ENCODE measurements at regions of chr7 and their contacts with region 1.

Region 1: DNA sequence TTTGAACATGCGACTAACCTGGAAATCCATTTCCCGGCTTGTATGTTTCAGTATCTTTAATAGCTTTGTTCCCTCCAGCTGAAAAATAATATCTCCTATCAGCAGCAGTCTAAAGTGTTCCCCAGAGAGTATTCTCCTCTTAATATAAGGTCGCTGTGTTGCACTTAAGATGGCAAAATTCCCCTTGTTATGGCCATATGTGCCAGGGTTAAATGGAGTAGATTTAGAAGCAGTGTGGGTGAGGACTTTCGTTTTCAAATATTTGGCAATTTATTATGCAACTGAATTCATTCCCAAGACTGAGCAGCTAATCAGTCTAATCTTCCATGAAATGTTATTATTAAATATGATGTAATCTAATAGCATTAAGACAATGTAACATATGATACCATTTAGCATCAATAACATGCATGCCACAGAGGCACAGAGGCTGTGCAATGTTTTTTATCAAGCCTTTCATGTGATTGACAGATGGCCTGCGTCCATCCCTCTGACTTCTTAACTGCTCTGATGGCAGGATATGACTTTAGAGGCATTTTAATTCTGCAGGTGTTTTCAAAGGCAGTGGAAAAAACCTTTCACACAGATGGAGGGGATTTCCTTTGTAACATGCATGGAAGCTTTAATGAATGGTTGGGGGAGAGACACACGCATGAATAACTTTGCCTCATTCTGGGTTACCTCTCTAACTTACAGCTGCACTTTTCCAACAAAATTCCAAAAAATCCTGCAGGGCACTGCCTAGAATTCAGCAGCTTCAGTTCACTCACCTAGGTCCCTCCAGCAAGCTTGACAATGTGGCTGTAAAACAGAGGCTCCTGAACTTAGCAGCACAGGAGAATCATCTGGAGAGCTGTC is 55.1 kb upstream of the ZPBP start:
- DNase-seq: peak; percentile 76
- ATAC-seq: peak; percentile 70
- H3K4me3 ChIP-seq: no peak overlapping the region
- H3K27ac ChIP-seq: peak overlapping the region; percentile 59
- H3K4me1 ChIP-seq: peaks cover 46% of the 10 kb centered on the region
- H3K27me3 ChIP-seq: no peaks in the 10 kb centered on the region
- CTCF ChIP-seq: no peak
- EP300 ChIP-seq: peak; percentile 52 to 85; a peak in 3 of 4 replicates
- POLR2A ChIP-seq: no peak
- RAD21 ChIP-seq: no peak

Region 2: DNA sequence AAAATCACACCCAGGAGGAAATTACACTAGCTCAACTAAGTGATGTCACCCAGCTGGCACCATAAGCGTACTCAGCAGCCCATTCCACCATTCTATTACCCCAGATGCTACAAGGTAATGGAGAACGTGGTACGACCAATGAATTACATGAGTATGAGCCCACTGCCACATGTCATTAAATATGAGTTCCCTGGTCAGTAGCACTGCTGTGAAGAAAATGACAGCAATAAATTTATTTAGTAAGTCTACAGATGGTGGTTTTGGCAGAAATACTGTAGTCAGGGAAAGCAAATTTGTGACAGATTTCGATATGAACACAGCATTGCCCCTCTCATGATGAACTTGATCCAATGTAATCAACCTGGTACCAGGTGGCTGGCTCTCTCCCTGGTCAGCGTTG is 220.5 kb before region 1 on chr7:
- CTCF ChIA-PET with region 1: no interaction called
- POLR2A ChIA-PET with region 1: no interaction called
- RAD21 ChIA-PET with region 1: no interaction called
- SMC1A ChIA-PET with region 1: no interaction called
- in situ Hi-C with region 1: no loop called
- intact Hi-C with region 1: no loop called
- DNase-seq: no peak
- ATAC-seq: no peak
- H3K4me3 ChIP-seq: no peak overlapping the region
- H3K27ac ChIP-seq: no peak overlapping the region
- H3K4me1 ChIP-seq: no peaks in the 10 kb centered on the region
- H3K27me3 ChIP-seq: no peaks in the 10 kb centered on the region
- CTCF ChIP-seq: no peak
- EP300 ChIP-seq: no peak
- POLR2A ChIP-seq: no peak
- RAD21 ChIP-seq: no peak

Region 3: GRCh38 chr7:50119815-50120637 is 28.2 kb before region 1 on chr7:
- CTCF ChIA-PET with region 1: interaction called, 24 read pairs
- POLR2A ChIA-PET with region 1: no interaction called
- RAD21 ChIA-PET with region 1: interaction called, 8 read pairs
- SMC1A ChIA-PET with region 1: interaction called, 4 read pairs
- in situ Hi-C with region 1: no loop called
- intact Hi-C with region 1: no loop called
- DNase-seq: no peak
- ATAC-seq: peak; percentile 98
- H3K4me3 ChIP-seq: no peak overlapping the region
- H3K27ac ChIP-seq: no peak overlapping the region
- H3K4me1 ChIP-seq: peaks cover 4% of the 10 kb centered on the region; the same call in 1 of the 2 replicates
- H3K27me3 ChIP-seq: no peaks in the 10 kb centered on the region
- CTCF ChIP-seq: peak; percentile 68 to 70 (median 69)
- EP300 ChIP-seq: no peak
- POLR2A ChIP-seq: no peak
- RAD21 ChIP-seq: peak; percentile 77

Region 4: GRCh38 chr7:50185951-50186682 is 37.9 kb after region 1 on chr7:
- CTCF ChIA-PET with region 1: interaction called, 8 read pairs
- POLR2A ChIA-PET with region 1: no interaction called
- RAD21 ChIA-PET with region 1: interaction called, 4 read pairs
- SMC1A ChIA-PET with region 1: interaction called, 15 read pairs
- in situ Hi-C with region 1: no loop called
- intact Hi-C with region 1: no loop called
- DNase-seq: no peak
- ATAC-seq: no peak; the same call in 1 of the 3 replicates
- H3K4me3 ChIP-seq: no peak overlapping the region
- H3K27ac ChIP-seq: no peak overlapping the region
- H3K4me1 ChIP-seq: no peaks in the 10 kb centered on the region
- H3K27me3 ChIP-seq: no peaks in the 10 kb centered on the region
- CTCF ChIP-seq: no peak
- EP300 ChIP-seq: no peak
- POLR2A ChIP-seq: no peak
- RAD21 ChIP-seq: no peak

Region 5: GRCh38 chr7:50197549-50197948 is 49.4 kb after region 1 on chr7:
- CTCF ChIA-PET with region 1: interaction called, 151 read pairs
- POLR2A ChIA-PET with region 1: interaction called, 4 read pairs
- RAD21 ChIA-PET with region 1: interaction called, 135 read pairs
- SMC1A ChIA-PET with region 1: interaction called, 160 read pairs
- in situ Hi-C with region 1: no loop called
- intact Hi-C with region 1: no loop called
- DNase-seq: peak; percentile 54
- ATAC-seq: peak; percentile 97
- H3K4me3 ChIP-seq: no peak overlapping the region
- H3K27ac ChIP-seq: no peak overlapping the region
- H3K4me1 ChIP-seq: no peaks in the 10 kb centered on the region; the same call in 1 of the 2 replicates
- H3K27me3 ChIP-seq: no peaks in the 10 kb centered on the region
- CTCF ChIP-seq: no peak
- EP300 ChIP-seq: no peak
- POLR2A ChIP-seq: no peak
- RAD21 ChIP-seq: no peak

Region 6: GRCh38 chr7:50229964-50230363 is 81.8 kb after region 1 on chr7:
- CTCF ChIA-PET with region 1: interaction called, 4 read pairs
- POLR2A ChIA-PET with region 1: no interaction called
- RAD21 ChIA-PET with region 1: no interaction called
- SMC1A ChIA-PET with region 1: interaction called, 11 read pairs
- in situ Hi-C with region 1: no loop called
- intact Hi-C with region 1: no loop called
- DNase-seq: no peak
- ATAC-seq: no peak
- H3K4me3 ChIP-seq: no peak overlapping the region
- H3K27ac ChIP-seq: no peak overlapping the region
- H3K4me1 ChIP-seq: no peaks in the 10 kb centered on the region
- H3K27me3 ChIP-seq: no peaks in the 10 kb centered on the region
- CTCF ChIP-seq: peak; percentile 21 to 58 (median 46); a peak in 5 of 6 replicates
- EP300 ChIP-seq: no peak
- POLR2A ChIP-seq: no peak
- RAD21 ChIP-seq: peak; percentile 58

Region 7: DNA sequence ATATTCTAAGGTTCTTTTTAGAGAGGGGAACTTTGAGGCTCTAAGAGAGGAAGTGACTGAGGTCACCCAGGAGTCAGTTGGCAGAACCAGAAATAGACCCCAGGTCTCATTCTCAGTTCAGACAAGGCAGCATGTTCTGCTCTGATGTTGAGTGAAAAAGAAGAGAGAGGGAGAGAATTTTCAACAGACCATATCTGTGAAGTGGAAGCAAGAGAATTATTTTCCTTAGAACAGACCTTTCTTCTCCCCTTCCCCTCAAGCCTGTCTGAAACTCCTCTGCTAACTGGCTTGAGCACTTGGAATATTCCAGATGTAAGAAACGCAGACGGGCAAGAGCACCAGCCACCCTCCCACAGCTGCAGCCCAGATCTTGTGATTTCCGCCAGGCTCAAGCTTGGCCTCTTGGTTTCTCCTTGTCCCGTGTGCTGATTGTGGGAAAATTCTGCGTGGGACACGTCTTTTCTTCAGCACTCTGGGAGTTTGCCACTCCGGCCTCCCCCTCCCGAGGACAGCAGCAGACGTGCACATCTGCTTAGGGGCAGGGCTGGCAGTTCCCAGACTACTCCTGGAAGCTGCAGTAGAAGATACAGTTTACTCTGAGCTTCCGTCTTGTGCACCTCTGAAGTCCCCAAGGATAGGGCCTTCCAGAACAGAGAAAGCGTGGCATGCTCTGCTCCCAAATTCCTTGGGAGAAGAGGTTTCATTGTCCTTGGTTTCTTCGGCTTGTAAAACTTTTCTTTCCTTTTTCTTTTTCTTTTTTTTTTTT is 133.7 kb after region 1 on chr7:
- CTCF ChIA-PET with region 1: no interaction called
- POLR2A ChIA-PET with region 1: interaction called, 13 read pairs
- RAD21 ChIA-PET with region 1: interaction called, 11 read pairs
- SMC1A ChIA-PET with region 1: interaction called, 162 read pairs
- in situ Hi-C with region 1: no loop called
- intact Hi-C with region 1: no loop called
- DNase-seq: peak; percentile 81
- ATAC-seq: peak; percentile 88
- H3K4me3 ChIP-seq: peak overlapping the region; percentile 69
- H3K27ac ChIP-seq: peak overlapping the region; percentile 82
- H3K4me1 ChIP-seq: peaks cover 49% of the 10 kb centered on the region
- H3K27me3 ChIP-seq: no peaks in the 10 kb centered on the region
- CTCF ChIP-seq: no peak
- EP300 ChIP-seq: peak; percentile 35 to 72; a peak in 1 of 4 replicates
- POLR2A ChIP-seq: peak; percentile 54; the same call in 1 of the 2 replicates
- RAD21 ChIP-seq: peak; percentile 29; the same call in 1 of the 2 replicates

Region 8: DNA sequence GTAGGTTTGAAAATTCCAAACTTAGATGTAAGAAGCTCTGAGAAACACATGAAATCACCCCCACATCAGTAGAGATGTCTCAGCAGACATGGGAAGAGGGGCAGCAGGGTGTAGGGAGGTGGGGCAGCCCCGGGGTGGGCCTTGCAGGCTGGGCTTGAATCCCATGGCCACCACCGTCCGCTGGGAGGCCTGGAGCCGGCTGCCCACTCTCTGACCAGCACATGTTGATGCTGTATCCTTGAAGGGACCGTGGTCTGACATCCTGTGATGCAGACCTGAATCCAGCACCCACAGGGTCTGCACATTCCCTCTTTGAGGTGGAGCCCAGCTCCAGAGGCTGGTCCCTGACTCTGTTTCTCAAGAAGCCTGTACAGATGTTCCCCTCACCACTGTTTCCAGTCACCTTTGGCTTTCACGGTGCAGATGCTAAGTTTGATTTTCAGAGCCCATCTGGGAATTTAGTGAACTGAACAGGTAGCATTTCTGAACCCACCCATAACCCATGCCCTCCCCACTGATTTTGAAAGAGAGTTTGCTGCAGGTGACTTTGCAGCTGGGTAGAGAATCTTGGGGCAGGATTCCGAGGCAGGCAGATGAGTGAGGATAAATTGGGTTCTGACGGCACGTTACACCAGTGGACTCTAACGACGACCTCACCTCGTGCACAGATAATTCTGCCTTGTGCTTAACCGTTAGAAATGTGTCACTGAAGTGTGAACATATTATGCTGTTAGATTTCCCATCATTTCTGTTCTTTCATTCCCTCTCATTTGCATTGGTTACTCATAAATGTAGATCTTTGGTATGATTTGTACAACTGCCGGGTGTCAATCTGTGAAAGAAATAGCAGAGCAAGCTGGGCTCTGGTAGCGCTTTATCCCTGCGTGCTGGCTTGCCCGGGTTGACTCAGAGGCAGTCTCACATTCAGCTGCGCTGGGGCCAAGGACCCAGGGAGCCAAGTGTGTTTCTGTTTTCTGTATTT is 202.1 kb after region 1 on chr7:
- CTCF ChIA-PET with region 1: interaction called, 4 read pairs
- POLR2A ChIA-PET with region 1: interaction called, 3 read pairs
- RAD21 ChIA-PET with region 1: interaction called, 6 read pairs
- SMC1A ChIA-PET with region 1: interaction called, 11 read pairs
- in situ Hi-C with region 1: no loop called
- intact Hi-C with region 1: no loop called
- DNase-seq: peak; percentile 84
- ATAC-seq: peak; percentile 90
- H3K4me3 ChIP-seq: no peak overlapping the region
- H3K27ac ChIP-seq: peak overlapping the region; percentile 86
- H3K4me1 ChIP-seq: peaks cover 31% of the 10 kb centered on the region
- H3K27me3 ChIP-seq: no peaks in the 10 kb centered on the region
- CTCF ChIP-seq: no peak
- EP300 ChIP-seq: peak; percentile 78 to 84
- POLR2A ChIP-seq: peak; percentile 44; the same call in 1 of the 2 replicates
- RAD21 ChIP-seq: 0 out of 2 replicates have a peak, but pooled peaks have one; percentile 24

Measured in GM12878 (cell line).